ENCODE measurements at regions of chr17 and their contacts with region 1.

Region 1: GRCh38 chr17:45364531-45365390 is 47.9 kb upstream of the MAP3K14 start:
- DNase-seq: no peak
- H3K4me3 Mint-ChIP-seq: no peak overlapping the region
- H3K27ac Mint-ChIP-seq: no peak overlapping the region
- H3K4me1 Mint-ChIP-seq: no peaks in the 10 kb centered on the region
- H3K27me3 Mint-ChIP-seq: peaks cover 29% of the 10 kb centered on the region

Region 2: DNA sequence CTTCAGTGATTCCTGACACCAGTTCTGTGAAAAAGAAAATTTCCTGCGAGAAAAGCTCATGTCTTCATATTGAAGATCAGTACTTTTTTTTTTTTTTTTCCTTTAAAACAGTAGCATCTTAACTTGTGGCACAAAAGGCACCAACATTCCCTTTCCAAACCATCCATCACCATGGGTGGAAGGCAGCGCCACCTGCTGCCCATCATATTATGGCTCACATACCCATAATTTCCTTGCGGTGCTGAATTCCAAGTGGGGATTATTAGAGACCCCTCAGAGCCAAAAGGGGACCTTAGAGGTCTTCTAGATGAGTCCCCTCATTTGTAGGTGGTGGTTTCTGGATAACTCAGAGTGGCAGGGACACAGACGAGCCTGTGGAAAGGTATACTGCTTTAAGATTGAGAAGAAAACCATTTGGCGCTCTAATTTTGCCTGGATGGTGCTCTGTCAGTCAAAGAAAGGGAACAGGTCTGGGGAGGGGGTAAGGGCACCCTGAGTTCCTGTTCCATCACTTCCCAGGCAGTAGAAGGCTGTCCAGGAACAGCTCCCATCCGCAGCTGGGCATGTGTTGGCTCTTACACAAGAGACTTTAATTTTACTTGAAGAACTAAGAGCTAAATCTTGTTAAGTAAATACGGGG is 1598.2 kb before region 1 on chr17:
- intact Hi-C with region 1: no loop called
- DNase-seq: peak; percentile 79
- H3K4me3 Mint-ChIP-seq: no peak overlapping the region
- H3K27ac Mint-ChIP-seq: no peak overlapping the region
- H3K4me1 Mint-ChIP-seq: no peaks in the 10 kb centered on the region
- H3K27me3 Mint-ChIP-seq: no peaks in the 10 kb centered on the region

Region 3: DNA sequence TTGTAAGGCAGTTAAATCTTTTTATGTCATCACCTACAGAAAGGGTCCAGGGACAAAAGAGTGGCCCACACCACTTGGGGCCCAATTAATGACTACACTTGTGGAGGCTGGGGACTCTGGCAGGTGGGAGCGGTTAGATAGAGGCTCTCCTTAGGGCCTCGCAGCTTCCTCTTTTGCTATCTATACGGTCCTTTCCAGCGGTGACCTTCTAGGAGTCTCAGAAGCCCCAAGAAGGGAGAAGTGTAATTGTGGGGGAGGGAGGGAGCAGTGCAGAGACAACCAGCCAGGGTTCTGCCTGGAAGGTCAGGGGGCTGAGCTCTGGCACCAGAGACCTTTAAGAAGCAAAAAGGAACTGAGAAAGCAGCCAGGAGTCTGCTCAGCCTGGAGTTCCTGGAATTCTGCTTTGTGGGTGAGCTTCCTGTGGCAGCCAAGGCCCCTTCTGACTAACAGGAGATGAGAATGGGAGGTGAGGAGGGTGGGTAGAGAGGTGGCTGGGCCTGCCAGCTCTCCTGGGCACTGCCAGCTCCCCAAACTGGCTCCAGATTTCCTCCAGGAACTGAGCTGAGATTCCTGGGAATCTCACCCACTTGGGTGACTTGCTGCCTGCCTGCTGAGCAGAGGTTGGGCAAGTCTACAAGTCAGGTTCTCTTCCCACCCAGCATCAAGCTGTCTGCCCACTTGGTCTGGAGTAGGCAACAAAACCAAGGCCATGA is 31.6 kb before region 1 on chr17:
- intact Hi-C with region 1: loop called (anchors 5 kb)
- DNase-seq: peak; percentile 55
- H3K4me3 Mint-ChIP-seq: peak overlapping the region; percentile 39
- H3K27ac Mint-ChIP-seq: peak overlapping the region; percentile 67
- H3K4me1 Mint-ChIP-seq: peaks cover 24% of the 10 kb centered on the region
- H3K27me3 Mint-ChIP-seq: peaks cover 2% of the 10 kb centered on the region

Measured in activated CD4-positive, alpha-beta T cell treated with anti-CD3 and anti-CD28 coated beads, Interleukin-2, amount 10 ng/mL, durations not matched to agents 24 days and 14 days (primary cell).